Right ventricle myocardium inferior (tissue), 1 donor: ENCODE measurements at regions of chr4 and their contacts with region 1.

Region 1: DNA sequence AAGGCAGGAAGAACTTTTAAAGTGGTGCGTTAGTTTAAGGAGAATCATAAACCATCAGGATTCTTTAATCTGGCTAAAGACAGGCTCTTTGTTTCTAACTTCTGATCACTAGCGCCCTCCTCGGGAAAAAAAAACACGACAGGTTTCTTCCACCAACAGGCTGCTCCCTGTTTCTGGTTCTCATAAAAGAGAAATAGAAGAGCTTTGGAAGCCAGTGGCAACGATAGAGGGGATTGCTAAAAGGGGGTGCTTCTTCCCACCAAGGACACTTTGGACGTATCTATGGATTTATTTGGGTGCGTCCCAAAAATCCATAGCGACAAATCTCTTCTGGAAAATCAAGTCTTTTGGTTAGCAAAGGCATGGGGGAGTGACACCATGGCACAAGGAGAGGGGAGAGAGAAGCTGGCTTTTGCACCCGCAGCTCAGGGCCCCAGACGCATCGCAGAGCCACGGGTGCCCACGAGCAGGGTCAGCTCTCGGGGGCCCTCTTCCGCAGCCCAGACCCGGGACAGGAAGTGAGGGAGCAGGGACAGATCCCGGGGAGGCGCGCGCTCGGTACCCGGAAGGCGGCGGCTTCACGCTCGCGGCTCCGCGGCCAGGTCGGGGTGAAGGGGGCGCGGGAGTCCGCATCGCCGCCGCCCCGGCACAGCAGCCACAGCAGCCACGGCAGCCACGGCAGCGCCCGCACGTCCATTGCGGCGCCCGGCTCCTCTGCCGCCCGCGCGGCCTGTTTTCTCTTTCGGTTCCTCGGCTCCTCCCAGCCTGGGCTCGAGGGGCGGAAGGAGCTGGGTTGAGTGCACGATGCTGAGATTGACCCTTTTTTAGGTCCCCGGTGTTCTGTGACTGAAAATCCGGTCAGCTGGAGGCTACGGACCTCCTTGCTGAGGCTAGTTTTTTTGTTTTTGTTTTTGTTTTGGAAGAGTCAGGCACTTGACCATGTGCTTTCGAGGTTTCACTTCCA is at the start of gene CTSO:
- DNase-seq: peak; percentile 86
- ATAC-seq: peak; percentile 96
- total RNA-seq, gene CTSO: 7.4 TPM

Region 2: DNA sequence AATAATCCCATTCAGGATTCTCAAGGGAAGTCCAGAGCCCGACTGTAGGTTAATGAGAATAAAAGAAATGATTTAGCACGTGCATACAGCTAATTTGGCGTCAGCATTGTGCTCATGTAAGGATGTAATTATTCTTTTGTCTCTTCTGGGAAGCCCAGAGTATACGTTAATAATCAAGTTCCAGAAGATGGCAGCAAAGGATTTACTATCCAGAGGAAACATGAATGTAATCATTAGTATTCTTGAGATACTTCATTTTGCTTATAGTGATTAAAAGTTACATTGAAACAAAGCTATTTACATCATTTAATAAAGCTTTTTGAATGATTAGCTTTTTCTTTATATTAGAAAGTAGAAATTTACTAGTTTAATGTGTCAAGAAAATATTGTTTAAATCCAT is 549.5 kb before region 1 on chr4:
- intact Hi-C with region 1: loop called (anchors 2 kb)
- DNase-seq: no peak
- ATAC-seq: no peak

Region 3: GRCh38 chr4:155777971-155778735 is 175.3 kb before region 1 on chr4:
- intact Hi-C with region 1: no loop called
- DNase-seq: no peak
- ATAC-seq: no peak

Region 4: DNA sequence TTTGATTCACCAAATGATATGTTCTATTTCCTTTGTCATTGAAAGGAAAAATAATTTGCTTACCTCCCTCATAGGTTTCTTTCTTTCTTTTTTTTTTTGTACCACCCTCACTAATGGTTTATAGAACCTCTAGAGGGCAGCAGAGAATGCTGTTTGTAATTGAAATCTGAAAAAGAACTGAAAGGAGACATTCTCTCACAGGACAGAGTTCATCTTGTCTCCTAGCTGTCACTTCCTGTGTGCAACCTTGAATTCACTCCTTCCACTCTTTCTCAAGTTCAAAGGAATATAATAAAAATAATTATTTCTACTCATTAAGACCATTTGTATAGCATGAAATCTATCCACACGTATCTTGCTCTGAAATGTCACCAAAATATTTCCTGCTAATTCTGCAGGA is 143.6 kb before region 1 on chr4:
- intact Hi-C with region 1: loop called (anchors 2 kb)
- DNase-seq: no peak
- ATAC-seq: peak; percentile 76